ENCODE measurements at regions of chr1 and their contacts with region 1.

Region 1: DNA sequence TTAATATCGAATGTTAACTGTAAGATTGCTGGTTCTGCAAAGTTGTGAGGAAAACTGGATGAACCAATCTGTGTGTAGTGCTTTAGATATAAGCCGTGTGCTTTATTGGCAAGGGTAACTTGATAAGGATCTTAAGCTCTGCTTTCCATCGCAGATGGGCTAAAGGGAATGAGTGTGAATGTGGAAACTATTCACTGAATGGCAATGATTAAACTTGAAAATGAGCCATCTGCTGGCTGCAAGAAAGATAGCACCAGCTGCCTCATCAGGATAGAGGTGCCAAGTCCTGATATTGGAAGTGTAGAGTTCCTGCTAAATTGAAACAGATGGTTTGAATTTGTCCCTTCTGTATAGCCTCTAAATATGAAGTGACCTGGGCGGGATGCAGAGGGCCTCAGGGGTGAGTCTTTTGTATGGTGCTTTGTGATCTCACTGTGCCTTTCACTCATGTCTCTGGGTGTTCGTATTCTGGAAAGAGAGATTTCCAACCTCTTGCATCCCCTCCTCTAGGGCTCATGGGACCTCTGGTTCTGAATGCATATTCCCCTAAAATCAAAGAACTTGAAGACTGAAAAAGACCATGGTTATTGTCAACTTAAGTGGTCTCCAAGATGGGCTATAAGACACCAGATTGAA is 9.2 kb downstream of the FCRL3 start:
- DNase-seq: no peak
- H3K4me3 ChIP-seq: no peak overlapping the region
- H3K27ac ChIP-seq: no peak overlapping the region
- H3K4me1 ChIP-seq: peaks cover 0 to 2% (median 0%) of the 10 kb centered on the region in 4 experiments; a peak in 3 of 7 replicates
- H3K27me3 ChIP-seq: no peaks in the 10 kb centered on the region
- CTCF ChIP-seq: peak in 2 of 3 experiments; percentile 67 to 78; a peak in 3 of 4 replicates
- EP300 ChIP-seq: no peak
- POLR2A ChIP-seq: no peak
- RAD21 ChIP-seq: peak; percentile 62 to 65

Region 2: DNA sequence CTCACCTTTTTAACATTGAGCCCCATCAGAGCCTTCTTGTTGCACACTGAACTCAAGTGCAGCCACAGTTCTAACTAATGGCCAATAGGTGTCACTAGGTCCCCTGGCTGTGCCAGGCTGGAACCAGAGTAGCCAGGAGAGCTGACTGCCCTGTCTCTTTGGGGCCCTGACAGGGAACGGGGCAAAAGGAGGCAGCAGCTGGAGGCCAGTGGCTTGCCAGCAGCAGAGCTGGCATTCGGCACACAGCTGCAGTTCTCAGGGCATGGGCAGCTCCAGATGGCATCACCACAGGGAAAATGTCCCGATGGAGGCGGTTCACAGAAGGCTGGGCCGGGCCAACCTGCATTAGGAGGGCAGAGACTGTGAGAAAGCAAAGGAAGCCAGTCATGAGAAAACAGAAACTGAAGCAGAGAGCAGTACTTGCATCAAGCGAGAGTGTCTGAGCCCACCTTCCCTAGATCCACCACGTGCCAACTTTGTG is 327.7 kb before region 1 on chr1:
- CTCF ChIA-PET with region 1: no interaction called
- POLR2A ChIA-PET with region 1: no interaction called
- DNase-seq: peak; percentile 33 to 57
- H3K4me3 ChIP-seq: no peak overlapping the region
- H3K27ac ChIP-seq: no peak overlapping the region
- H3K4me1 ChIP-seq: 0 out of 7 replicates have a peak, but pooled peaks cover 0 to 4% (median 0%) of the 10 kb centered on the region in 4 experiments
- H3K27me3 ChIP-seq: no peaks in the 10 kb centered on the region
- CTCF ChIP-seq: peak; percentile 67 to 85 (median 68)
- EP300 ChIP-seq: no peak
- POLR2A ChIP-seq: no peak
- RAD21 ChIP-seq: peak; percentile 72 to 81

Region 3: GRCh38 chr1:157472056-157472698 is 219.2 kb before region 1 on chr1:
- CTCF ChIA-PET with region 1: no interaction called
- POLR2A ChIA-PET with region 1: no interaction called
- DNase-seq: no peak
- H3K4me3 ChIP-seq: no peak overlapping the region
- H3K27ac ChIP-seq: no peak overlapping the region
- H3K4me1 ChIP-seq: peaks cover 0 to 8% (median 4%) of the 10 kb centered on the region in 4 experiments; a peak in 4 of 7 replicates
- H3K27me3 ChIP-seq: peaks cover 0 to 1% (median 0%) of the 10 kb centered on the region in 4 experiments; a peak in 2 of 7 replicates
- CTCF ChIP-seq: no peak
- EP300 ChIP-seq: no peak
- POLR2A ChIP-seq: no peak
- RAD21 ChIP-seq: no peak

Region 4: DNA sequence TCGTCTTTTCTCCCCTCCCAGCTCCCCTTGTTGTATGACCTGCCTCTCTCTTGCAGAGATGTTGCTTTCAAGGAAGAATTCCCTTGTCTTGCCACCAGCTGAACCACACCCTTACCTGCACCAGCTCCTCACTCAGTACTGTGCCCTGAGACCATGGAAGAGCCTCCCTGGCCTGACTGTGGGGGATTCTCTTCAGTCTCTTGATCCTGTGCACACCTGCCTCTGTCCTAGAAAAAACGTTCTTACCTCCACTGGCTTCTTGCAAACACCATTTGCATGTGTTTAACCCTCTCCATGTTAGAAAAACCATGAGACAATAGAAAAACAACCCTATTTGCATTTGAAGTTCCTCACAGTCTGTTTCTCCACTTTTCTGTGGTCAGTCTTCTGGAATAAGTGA is 50.2 kb before region 1 on chr1:
- CTCF ChIA-PET with region 1: no interaction called
- POLR2A ChIA-PET with region 1: no interaction called
- DNase-seq: no peak
- H3K4me3 ChIP-seq: 0 out of 8 replicates have a peak overlapping the region, but pooled peaks of 1 of the 4 experiments have one; percentile 21
- H3K27ac ChIP-seq: no peak overlapping the region
- H3K4me1 ChIP-seq: peaks cover 2 to 13% (median 7%) of the 10 kb centered on the region in 4 experiments; a peak in 5 of 7 replicates
- H3K27me3 ChIP-seq: no peaks in the 10 kb centered on the region; a peak in 1 of 7 replicates
- CTCF ChIP-seq: no peak
- EP300 ChIP-seq: no peak
- POLR2A ChIP-seq: no peak
- RAD21 ChIP-seq: no peak

Region 5: GRCh38 chr1:157678721-157679120 is 12.7 kb before region 1 on chr1:
- CTCF ChIA-PET with region 1: interaction called, 14 read pairs
- POLR2A ChIA-PET with region 1: interaction called, 4 read pairs
- DNase-seq: no peak
- H3K4me3 ChIP-seq: no peak overlapping the region
- H3K27ac ChIP-seq: no peak overlapping the region
- H3K4me1 ChIP-seq: no peaks in the 10 kb centered on the region
- H3K27me3 ChIP-seq: no peaks in the 10 kb centered on the region
- CTCF ChIP-seq: no peak
- EP300 ChIP-seq: no peak
- POLR2A ChIP-seq: no peak
- RAD21 ChIP-seq: no peak

Region 6: DNA sequence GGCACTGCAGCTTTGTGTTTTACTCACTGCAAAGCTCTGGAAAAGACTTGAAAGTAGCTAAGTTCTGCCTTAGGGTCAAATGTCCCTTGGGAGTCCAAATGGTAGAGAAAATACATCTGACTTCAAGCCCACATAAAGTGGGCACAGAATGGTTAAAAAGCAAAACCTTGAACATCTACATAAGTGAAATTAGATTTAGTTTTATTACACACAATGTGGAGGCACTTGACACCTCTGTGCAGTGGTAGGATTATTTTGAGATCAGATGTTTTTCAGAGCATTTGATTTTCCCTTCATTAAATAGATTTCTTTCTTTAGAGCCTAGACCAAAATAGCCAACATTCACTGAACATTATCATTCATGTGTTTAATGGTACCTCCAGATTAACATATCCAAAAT is 20.4 kb after region 1 on chr1:
- CTCF ChIA-PET with region 1: interaction called, 11 read pairs
- POLR2A ChIA-PET with region 1: no interaction called
- DNase-seq: no peak
- H3K4me3 ChIP-seq: no peak overlapping the region
- H3K27ac ChIP-seq: no peak overlapping the region
- H3K4me1 ChIP-seq: no peaks in the 10 kb centered on the region
- H3K27me3 ChIP-seq: no peaks in the 10 kb centered on the region
- CTCF ChIP-seq: no peak
- EP300 ChIP-seq: no peak
- POLR2A ChIP-seq: no peak
- RAD21 ChIP-seq: no peak